A673 (cell line): ENCODE measurements at regions of chr4 and their contacts with region 1.

Region 1: GRCh38 chr4:48963042-48963679 is 22.9 kb upstream of the CWH43 start:
- DNase-seq: peak; percentile 91
- H3K4me3 ChIP-seq: no peak overlapping the region
- H3K27ac ChIP-seq: no peak overlapping the region
- H3K4me1 ChIP-seq: no peaks in the 10 kb centered on the region
- H3K27me3 ChIP-seq: no peaks in the 10 kb centered on the region
- CTCF ChIP-seq: peak; percentile 99

Region 2: GRCh38 chr4:47235721-47236120 is 1727.4 kb before region 1 on chr4:
- CTCF ChIA-PET with region 1: no interaction called
- POLR2A ChIA-PET with region 1: no interaction called
- intact Hi-C with region 1: no loop called
- DNase-seq: no peak
- H3K4me3 ChIP-seq: no peak overlapping the region
- H3K27ac ChIP-seq: no peak overlapping the region
- H3K4me1 ChIP-seq: no peaks in the 10 kb centered on the region
- H3K27me3 ChIP-seq: no peaks in the 10 kb centered on the region
- CTCF ChIP-seq: no peak

Region 3: DNA sequence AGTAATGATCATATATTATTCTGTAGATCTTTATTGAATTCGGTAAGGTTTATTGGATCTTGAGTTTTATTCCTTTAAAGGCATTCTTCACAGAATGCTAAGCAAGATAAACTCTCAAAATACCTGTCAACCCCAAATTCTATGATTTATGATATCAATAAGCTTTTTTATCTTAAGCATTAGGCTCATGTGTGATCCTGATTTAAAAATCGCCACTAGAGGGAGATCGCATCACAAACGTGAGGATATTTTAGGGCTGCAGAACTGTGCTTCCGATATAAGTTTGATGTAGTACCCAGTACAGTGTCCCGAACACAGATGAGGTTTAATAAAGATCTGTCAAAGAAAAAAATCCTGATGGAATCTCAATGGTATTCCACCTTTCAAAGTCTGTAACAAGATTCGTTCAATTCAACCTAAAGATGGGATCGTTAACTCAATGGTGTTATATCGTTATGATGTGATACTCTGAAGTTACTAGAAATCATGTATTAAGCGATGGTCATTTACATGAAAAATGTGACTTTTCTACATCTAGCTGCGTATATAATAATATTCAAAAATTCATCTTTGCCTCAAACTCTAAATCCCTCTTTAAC is 1294.3 kb before region 1 on chr4:
- CTCF ChIA-PET with region 1: no interaction called
- POLR2A ChIA-PET with region 1: no interaction called
- intact Hi-C with region 1: no loop called
- DNase-seq: peak; percentile 68
- H3K4me3 ChIP-seq: no peak overlapping the region
- H3K27ac ChIP-seq: no peak overlapping the region
- H3K4me1 ChIP-seq: no peaks in the 10 kb centered on the region
- H3K27me3 ChIP-seq: no peaks in the 10 kb centered on the region
- CTCF ChIP-seq: peak; percentile 86

Region 4: DNA sequence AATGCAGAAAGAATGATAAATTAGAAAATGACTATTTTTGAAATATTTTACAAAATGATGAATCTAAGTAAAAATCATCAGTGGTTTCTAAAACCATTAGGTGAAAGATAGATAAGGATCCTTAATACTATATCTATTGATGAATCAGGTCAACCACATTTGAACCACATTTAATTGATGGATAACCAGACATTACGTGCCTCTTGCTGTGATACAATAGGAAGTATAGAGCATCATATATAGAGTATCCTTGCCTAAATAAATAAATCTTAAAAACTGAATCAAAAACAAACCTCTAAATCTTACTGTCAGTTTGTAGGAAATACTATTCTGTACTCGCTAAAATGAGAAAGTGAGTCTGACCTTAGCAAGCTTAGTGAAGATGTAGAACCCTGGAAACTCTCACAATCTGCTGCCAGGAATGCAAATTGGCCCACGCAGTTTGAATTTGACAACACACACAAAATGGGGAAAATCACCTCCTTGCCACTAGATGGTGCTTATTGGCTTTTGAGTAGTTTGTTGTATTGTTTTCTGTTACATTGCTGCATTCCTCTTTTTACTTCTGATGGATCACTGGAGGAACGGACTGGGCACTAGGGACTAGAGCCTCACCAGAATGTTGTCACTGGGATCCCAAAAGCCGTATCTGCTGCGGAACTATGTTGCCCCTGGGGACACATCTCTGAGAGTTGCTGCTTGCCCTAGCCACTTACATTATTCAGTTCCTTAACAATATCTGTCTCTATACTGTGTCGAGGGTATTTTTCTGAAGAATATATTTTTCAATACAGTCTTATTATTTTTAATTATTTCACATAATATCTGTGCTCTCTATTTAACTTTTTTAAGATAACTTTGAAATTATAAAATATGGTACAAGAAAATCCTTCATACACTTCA is 647.2 kb before region 1 on chr4:
- CTCF ChIA-PET with region 1: no interaction called
- POLR2A ChIA-PET with region 1: no interaction called
- intact Hi-C with region 1: loop called (anchors 10 kb)
- DNase-seq: peak; percentile 84
- H3K4me3 ChIP-seq: no peak overlapping the region
- H3K27ac ChIP-seq: no peak overlapping the region
- H3K4me1 ChIP-seq: no peaks in the 10 kb centered on the region
- H3K27me3 ChIP-seq: no peaks in the 10 kb centered on the region
- CTCF ChIP-seq: peak; percentile 78

Region 5: DNA sequence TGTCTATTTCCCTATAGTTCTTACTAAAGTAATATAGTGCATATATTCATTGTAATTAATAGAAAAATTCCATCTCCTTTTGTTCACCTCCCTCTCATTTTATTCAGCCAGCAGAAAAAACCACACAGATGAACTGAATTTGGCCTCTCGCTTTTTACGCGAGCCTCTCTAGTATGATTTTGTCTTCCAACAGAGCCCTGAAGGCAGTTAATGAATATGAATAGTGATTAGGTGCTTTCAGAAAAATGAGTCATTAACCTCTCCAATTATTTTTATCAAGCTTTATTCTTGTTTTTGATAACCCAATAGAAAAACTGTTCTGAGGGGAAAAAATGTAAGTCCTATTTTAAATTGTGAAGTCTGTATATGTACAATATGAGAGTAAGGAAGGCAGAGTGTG is 399.0 kb before region 1 on chr4:
- CTCF ChIA-PET with region 1: no interaction called
- POLR2A ChIA-PET with region 1: no interaction called
- intact Hi-C with region 1: loop called (anchors 5 kb)
- DNase-seq: no peak
- H3K4me3 ChIP-seq: no peak overlapping the region
- H3K27ac ChIP-seq: no peak overlapping the region
- H3K4me1 ChIP-seq: no peaks in the 10 kb centered on the region
- H3K27me3 ChIP-seq: no peaks in the 10 kb centered on the region
- CTCF ChIP-seq: no peak

Region 6: DNA sequence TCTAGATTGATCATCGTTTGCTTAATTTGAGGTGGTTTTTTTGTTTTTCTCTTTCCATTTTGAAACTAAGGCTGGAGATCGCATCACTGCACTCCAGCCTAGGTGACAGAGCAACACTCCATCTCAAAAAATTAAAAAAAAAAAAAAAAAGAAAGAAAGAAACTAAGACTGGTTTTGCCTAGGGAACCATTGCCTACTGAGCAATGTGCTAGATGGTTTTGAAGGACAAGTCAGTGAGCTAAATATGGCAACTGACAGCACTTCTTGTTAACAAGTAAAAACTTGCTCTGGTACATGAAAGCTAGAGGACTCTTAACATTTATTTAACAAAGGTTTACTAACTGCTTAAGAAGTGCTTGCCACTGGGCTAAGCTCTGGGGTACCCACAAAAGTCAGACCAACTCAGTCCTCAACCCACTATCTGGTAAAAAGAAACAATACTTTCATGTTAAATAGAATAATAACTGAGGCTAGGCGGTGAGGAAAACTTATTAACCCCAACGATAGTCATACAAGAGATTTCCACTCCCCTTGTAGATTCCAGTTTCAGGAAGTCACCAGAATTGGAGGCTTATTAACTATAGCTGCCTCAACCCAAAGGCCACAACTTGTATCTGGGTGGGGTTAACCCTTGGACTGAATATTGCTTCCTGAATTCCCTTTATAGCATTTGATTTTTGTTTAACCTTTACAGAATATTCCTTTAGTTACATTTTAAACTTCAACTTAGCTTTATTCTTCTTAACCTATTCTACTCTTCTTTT is 294.7 kb before region 1 on chr4:
- CTCF ChIA-PET with region 1: no interaction called
- POLR2A ChIA-PET with region 1: no interaction called
- intact Hi-C with region 1: no loop called
- DNase-seq: no peak
- H3K4me3 ChIP-seq: no peak overlapping the region
- H3K27ac ChIP-seq: no peak overlapping the region
- H3K4me1 ChIP-seq: no peaks in the 10 kb centered on the region
- H3K27me3 ChIP-seq: no peaks in the 10 kb centered on the region
- CTCF ChIP-seq: no peak

Region 7: DNA sequence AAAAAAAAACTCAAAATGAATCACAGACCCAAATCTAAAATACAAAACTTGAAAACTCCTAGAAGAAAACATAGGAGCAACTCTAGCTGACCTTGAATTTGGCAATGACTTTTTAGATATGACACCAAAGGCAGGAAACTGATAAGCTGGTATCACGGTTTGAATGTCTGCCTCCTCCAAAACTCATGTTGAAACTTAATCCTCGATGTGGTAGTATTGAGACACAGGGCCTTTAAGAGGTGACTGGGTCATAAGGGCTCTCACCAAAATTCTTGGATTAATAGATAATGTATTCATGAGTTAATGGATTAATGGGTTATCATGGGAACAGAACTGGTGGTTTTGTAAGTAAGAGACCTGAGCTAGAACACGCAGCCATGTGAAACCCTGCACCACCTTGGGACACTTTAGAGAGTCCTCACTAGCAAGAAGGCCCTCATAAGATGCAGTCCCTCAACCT is 223.6 kb before region 1 on chr4:
- CTCF ChIA-PET with region 1: no interaction called
- POLR2A ChIA-PET with region 1: no interaction called
- intact Hi-C with region 1: no loop called
- DNase-seq: no peak
- H3K4me3 ChIP-seq: no peak overlapping the region
- H3K27ac ChIP-seq: no peak overlapping the region
- H3K4me1 ChIP-seq: peaks cover 6% of the 10 kb centered on the region
- H3K27me3 ChIP-seq: no peaks in the 10 kb centered on the region
- CTCF ChIP-seq: no peak

Region 8: DNA sequence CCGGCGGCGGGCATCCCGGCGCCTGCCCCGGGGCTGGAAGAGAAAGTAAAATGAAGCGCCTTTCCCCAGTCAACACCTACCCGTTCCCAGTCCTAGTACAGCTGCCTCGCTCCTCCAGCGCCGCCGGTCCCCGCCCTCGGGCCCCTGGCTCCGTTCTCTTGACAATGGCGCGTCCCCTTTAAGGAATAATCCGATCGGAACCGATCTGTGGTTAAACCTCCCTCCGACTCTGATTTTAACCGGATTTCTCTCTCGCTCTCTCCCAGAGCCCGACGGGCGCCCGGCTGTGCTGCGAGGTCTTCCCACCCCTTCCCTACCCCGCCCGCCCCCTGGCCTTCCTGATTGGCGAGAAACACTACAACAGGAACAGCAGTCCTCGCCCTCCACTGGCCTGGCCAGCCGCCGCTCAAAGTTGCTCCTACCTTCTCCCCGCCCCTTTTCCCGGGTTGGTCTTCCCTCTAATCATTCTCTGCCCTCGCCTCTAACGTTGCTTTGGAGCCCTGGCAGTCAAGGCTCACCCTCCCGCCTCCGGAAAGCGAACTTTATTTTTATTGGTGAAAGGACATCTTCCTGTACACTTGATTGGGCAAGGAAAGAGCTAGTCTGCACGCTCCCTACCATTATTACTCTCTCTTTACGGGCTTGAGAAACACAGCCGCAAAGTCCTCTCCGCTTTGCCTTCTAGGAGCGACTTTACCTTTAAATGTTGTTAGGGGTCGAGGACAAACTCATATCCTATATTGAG is 183.0 kb before region 1 on chr4 and contains the start of gene FRYL:
- CTCF ChIA-PET with region 1: no interaction called
- POLR2A ChIA-PET with region 1: no interaction called
- intact Hi-C with region 1: loop called (anchors 2 kb)
- DNase-seq: peak; percentile 100
- H3K4me3 ChIP-seq: peak within 1 kb of the TSS; percentile 96
- H3K27ac ChIP-seq: peak within 1 kb of the TSS; percentile 93
- H3K4me1 ChIP-seq: peaks cover 25% of the 10 kb centered on the region
- H3K27me3 ChIP-seq: no peaks in the 10 kb centered on the region
- CTCF ChIP-seq: no peak
- total RNA-seq, gene FRYL: 43.1 and 47.6 TPM in 2 replicates